Panc1 (cell line): ENCODE measurements at regions of chr5 and their contacts with region 1.

Region 1: DNA sequence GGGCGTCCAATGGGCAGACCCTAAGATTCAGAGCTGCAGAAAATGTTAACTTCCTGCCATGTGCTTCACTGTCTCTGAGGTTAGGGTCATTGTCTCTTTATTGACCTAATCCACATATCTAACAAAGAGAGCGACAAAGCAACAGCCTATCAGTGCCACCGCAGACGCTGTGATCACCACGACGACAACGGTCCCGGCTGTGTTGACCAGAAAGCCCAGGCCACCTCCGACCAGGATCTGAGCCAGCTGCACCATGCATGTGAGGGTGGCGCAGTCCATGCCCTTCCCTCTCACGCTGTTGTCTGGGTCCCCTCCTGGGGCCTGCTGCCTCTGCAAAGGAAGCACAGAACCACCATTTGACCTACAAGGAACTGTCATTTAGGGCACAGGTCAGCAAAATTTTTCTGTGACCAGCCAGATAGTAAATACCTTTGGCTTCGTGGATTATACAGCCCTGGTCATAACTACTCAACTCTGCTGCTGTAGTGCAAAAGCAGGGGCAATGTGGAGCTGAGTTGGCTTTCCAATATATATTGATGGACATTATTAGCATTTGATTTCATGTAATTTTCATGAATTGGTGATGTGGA is 8.5 kb downstream of the RXFP3 start:
- DNase-seq: no peak
- ATAC-seq: peak; percentile 45; the same call in 1 of the 2 replicates
- H3K4me3 ChIP-seq: no peak overlapping the region
- H3K27ac ChIP-seq: no peak overlapping the region
- H3K4me1 ChIP-seq: no peaks in the 10 kb centered on the region
- H3K27me3 ChIP-seq: peaks cover 18% of the 10 kb centered on the region
- CTCF ChIP-seq: no peak

Region 2: DNA sequence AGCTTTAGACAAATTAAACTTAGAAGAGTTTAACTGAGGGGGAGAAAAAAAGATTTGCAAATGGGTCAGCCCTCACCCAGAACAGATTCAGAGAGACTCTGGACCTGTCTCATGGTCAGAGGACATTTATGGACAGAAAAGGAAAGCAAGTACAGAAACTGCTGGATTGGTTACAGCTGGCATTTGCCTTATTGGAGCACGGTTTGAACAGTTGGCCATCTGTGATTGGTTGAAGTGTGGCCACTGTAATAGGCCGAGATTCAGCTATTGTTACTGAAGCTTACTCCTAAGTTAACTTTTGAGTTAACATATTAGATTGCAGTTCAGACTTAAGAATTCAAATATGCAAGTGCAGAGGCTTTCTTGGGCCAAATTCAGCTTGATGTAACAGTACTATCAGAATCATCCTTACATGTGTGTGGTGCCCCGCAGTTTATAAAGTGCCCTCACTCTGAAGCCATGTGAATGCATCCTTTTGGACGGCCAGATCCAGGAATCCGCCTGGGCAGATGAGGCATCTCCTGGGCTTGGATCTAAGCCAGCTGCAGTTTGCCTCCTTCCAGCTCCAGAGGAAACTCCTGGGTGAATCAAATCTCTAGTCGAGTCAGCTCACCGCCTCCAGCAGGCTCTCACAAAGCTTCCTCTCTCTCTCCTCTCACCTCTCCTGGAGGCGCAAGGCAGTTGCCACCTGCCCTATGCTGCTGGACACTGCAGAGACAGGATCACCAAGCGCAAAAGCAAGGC is 218.0 kb before region 1 on chr5:
- CTCF ChIA-PET with region 1: interaction called, 10 read pairs
- POLR2A ChIA-PET with region 1: no interaction called
- in situ Hi-C with region 1: no loop called
- intact Hi-C with region 1: no loop called
- DNase-seq: no peak
- ATAC-seq: no peak
- H3K4me3 ChIP-seq: no peak overlapping the region
- H3K27ac ChIP-seq: no peak overlapping the region
- H3K4me1 ChIP-seq: no peaks in the 10 kb centered on the region
- H3K27me3 ChIP-seq: no peaks in the 10 kb centered on the region
- CTCF ChIP-seq: no peak